Activated CD4-positive, alpha-beta T cell treated with anti-CD3 and anti-CD28 coated beads, Interleukin-2, amount 10 ng/mL, durations not matched to agents 24 days and 14 days (primary cell): ENCODE measurements at regions of chr14 and their contacts with region 1.

Region 1: GRCh38 chr14:32710731-32711680 is 227.7 kb upstream of the NPAS3 start:
- DNase-seq: peak; percentile 62
- H3K4me3 Mint-ChIP-seq: no peak overlapping the region
- H3K27ac Mint-ChIP-seq: no peak overlapping the region
- H3K4me1 Mint-ChIP-seq: no peaks in the 10 kb centered on the region
- H3K27me3 Mint-ChIP-seq: no peaks in the 10 kb centered on the region

Region 2: DNA sequence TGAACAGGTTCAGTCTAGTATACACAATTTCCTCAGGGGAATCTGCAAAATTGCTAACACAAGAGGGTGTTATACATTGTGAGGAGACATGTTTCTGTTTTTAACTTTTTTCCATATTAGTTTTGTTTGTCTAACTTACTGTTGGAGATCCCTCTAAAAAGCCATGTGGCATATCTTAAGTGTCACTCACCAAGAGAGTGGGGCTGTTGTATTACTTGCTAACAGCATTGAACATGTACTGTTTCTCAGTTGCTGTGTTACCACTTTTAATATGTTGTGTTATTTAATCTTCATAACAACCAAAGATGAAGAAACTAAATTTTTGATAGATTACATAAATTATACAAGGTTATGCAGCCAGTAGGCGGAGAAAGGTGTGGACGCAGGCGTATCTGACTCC is 73.4 kb after region 1 on chr14:
- intact Hi-C with region 1: no loop called
- DNase-seq: no peak
- H3K4me3 Mint-ChIP-seq: no peak overlapping the region
- H3K27ac Mint-ChIP-seq: no peak overlapping the region
- H3K4me1 Mint-ChIP-seq: no peaks in the 10 kb centered on the region
- H3K27me3 Mint-ChIP-seq: no peaks in the 10 kb centered on the region

Region 3: DNA sequence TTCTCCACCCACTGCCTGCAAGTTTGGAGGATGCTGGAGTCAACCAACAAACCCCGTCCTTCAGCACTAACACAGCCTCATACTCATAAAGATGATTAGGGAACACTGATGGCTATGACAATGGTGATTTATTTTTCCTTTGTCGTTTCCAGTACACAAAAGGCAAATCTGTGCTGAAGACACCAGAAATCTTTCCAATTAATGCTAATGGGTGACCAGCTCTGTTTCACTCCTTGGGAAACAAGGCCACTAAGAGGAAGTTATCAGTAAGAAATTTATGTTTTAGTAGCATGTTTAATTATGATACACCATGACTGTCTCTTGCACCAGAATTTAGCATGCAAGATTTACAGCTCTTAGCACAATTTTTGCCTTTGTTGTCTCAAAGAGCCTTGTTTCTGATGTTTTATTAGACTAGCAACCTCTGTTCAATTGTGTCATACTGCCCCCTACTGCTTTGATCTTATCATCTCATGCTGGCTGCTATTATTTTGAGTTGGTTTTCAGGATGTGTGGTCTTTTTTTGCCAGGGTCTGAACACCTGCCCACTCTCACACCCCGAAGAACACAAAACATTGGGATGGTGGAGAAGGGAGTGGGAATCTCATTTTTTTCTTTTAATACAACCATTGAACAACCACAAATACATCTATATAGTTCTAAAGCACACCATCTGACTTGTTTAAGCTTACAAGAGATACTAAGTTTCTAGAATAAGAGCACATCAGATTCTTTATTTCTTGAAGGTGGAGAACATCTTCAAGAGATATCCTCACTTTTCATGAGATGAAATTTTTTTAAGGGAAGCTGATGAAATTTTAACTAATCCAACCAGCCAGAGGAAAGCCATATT is 1590.1 kb after region 1 on chr14:
- intact Hi-C with region 1: loop called (anchors 2 kb)
- DNase-seq: peak; percentile 78
- H3K4me3 Mint-ChIP-seq: no peak overlapping the region
- H3K27ac Mint-ChIP-seq: no peak overlapping the region
- H3K4me1 Mint-ChIP-seq: no peaks in the 10 kb centered on the region
- H3K27me3 Mint-ChIP-seq: no peaks in the 10 kb centered on the region